Activated B cell treated with CpG ODN at 0.5 μM for 24 hours (primary cell): ENCODE measurements at regions of chrX and their contacts with region 1.

Region 1: DNA sequence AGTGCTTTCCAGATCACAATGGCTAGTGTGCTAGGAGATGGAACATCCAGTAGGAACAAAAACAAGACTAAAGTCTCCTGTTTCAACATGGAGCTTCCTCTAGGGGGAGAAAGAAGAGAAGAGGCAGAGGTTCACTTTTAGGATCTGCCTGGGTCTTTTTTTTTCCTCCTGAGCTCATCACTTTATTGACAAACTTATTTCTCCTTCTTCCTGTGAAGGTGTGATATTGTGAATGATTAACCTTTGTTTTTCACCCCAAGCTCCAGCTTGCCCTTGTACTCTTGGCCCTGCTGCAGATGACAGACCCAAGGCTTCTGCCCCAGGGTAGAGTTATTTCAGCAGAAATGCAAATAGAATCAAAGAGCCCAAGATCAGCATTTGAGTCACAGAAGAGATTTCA is 13.5 kb downstream of the PAGE4 start:
- DNase-seq: no peak
- ATAC-seq: no peak
- H3K4me3 Mint-ChIP-seq: no peak overlapping the region
- H3K27ac Mint-ChIP-seq: no peak overlapping the region
- H3K4me1 Mint-ChIP-seq: no peaks in the 10 kb centered on the region
- H3K27me3 Mint-ChIP-seq: no peaks in the 10 kb centered on the region
- CTCF ChIP-seq: no peak

Region 2: DNA sequence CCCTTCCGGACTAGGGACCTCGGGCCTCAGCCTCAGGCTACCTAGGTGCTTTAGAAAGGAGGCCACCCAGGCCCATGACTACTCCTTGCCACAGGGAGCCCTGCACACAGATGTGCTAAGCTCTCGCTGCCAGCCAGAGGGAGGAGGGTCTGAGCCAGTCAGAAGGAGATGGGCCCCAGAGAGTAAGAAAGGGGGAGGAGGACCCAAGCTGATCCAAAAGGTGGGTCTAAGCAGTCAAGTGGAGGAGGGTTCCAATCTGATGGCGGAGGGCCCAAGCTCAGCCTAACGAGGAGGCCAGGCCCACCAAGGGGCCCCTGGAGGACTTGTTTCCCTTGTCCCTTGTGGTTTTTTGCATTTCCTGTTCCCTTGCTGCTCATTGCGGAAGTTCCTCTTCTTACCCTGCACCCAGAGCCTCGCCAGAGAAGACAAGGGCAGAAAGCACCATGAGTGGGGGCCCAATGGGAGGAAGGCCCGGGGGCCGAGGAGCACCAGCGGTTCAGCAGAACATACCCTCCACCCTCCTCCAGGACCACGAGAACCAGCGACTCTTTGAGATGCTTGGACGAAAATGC is 1159.1 kb before region 1 on chrX and contains the start of gene WAS:
- CTCF ChIA-PET with region 1: no interaction called
- POLR2A ChIA-PET with region 1: no interaction called
- intact Hi-C with region 1: no loop called
- DNase-seq: peak; percentile 20
- ATAC-seq: peak; percentile 87
- H3K4me3 Mint-ChIP-seq: peak within 1 kb of the TSS; percentile 93
- H3K27ac Mint-ChIP-seq: peak within 1 kb of the TSS; percentile 94
- H3K4me1 Mint-ChIP-seq: peaks cover 58% of the 10 kb centered on the region
- H3K27me3 Mint-ChIP-seq: no peaks in the 10 kb centered on the region
- CTCF ChIP-seq: no peak
- total RNA-seq, gene WAS: 101 and 102 TPM in 2 replicates

Region 3: DNA sequence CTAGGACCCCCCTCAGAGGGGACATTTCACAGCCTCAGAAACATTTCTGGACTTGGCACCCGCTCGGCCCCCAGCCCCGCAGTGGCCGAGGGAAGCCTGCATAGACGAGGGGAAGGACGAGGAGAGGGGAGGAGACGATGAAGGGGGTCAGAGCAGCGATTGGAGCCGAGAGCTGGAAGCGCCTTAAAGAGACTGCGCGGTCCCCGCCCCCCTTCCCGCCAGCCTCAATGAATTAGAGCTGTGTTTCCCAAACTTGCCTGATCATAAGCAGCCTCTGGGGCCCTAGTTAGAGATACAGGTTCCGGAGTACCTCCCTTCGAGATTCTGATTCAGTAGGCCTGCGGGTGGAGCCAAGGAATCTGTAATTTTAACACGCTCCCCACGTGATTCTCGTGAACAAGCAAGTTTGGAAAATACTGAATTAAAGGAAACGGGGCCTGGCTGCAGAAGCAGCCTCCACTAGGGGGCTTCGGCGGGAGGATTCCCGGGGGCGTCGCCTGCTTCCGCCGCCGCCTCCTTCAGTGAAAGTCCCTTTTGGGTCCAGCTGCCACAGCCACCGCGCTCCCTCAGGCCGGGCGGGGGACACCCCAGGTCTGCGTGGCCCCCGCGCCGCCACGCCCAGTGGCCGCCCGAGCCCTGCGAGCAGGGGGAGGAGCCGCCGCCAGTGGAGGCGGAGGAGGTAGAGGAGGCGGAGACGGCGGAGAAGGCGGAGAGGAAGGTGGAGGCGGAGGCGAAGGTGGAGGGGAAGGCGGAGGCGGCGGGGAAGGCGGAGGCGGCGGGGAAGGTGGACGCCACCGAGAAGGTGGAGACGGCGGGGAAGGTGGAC is 36.4 kb after region 1 on chrX and contains the start of gene USP27X:
- CTCF ChIA-PET with region 1: interaction called, 4 read pairs
- POLR2A ChIA-PET with region 1: no interaction called
- intact Hi-C with region 1: loop called (anchors 1 kb)
- DNase-seq: peak; percentile 72
- ATAC-seq: peak; percentile 94
- H3K4me3 Mint-ChIP-seq: peak within 1 kb of the TSS; percentile 81
- H3K27ac Mint-ChIP-seq: peak within 1 kb of the TSS; percentile 78
- H3K4me1 Mint-ChIP-seq: peaks cover 30% of the 10 kb centered on the region
- H3K27me3 Mint-ChIP-seq: no peaks in the 10 kb centered on the region
- CTCF ChIP-seq: no peak
- total RNA-seq, gene USP27X: 2.3 and 2.8 TPM in 2 replicates

Region 4: GRCh38 chrX:50402881-50403280 is 560.3 kb after region 1 on chrX:
- CTCF ChIA-PET with region 1: no interaction called
- POLR2A ChIA-PET with region 1: no interaction called
- intact Hi-C with region 1: no loop called
- DNase-seq: no peak
- ATAC-seq: no peak
- H3K4me3 Mint-ChIP-seq: no peak overlapping the region
- H3K27ac Mint-ChIP-seq: no peak overlapping the region
- H3K4me1 Mint-ChIP-seq: no peaks in the 10 kb centered on the region
- H3K27me3 Mint-ChIP-seq: no peaks in the 10 kb centered on the region
- CTCF ChIP-seq: no peak